PC-9 (cell line): ENCODE measurements at regions of chrX and their contacts with region 1.

Region 1: DNA sequence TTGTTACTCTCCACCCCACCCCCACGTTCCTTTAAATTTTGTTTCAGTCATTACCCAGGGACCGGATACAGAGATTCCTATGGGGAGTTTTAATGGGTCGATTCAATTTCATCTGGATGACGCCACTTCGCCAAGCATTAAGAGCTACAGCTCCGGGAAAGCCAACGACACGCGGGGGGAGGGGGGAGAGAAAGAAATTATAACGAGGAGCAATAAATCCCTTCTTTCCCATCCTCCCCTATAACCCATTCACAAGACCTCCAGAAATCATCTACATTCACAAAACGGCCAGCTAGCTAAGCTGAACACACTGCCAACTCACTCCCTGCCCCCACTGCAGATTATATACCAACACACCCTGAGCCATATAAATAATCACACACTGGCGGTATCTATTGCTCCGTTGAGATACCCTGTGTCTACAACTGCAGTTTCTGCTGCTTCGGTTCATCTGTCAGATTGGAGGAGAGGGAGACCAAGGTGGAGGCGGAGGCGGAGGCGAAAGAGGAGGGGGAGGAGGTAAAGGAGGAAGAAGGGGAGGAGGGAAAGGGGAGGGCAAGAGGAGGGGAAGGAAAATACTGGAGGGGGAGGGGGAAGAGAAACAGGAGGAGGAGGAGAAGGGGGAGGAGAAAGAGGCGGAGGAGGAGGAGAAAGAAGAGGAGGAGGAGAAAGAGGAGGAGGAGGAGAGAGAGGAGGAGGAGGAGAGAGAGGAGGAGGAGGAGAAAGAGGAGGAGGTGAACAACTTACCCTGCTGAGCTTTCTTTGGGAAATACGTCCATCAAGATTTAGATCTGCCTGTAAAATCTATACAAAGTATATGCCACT is 113.9 kb upstream of the VAMP7 start:
- DNase-seq: peak; percentile 65 to 73
- H3K4me3 ChIP-seq: peak overlapping the region; percentile 79
- H3K27ac ChIP-seq: no peak overlapping the region
- H3K4me1 ChIP-seq: peaks cover 19% of the 10 kb centered on the region
- H3K27me3 ChIP-seq: no peaks in the 10 kb centered on the region
- CTCF ChIP-seq: no peak

Region 2: GRCh38 chrX:155745792-155746191 is 21.5 kb before region 1 on chrX:
- CTCF ChIA-PET with region 1: no interaction called
- POLR2A ChIA-PET with region 1: no interaction called
- intact Hi-C with region 1: loop called (anchors 2 kb)
- DNase-seq: peak; percentile 71 to 80
- H3K4me3 ChIP-seq: no peak overlapping the region
- H3K27ac ChIP-seq: peak overlapping the region; percentile 65
- H3K4me1 ChIP-seq: peaks cover 27% of the 10 kb centered on the region
- H3K27me3 ChIP-seq: no peaks in the 10 kb centered on the region
- CTCF ChIP-seq: no peak